Activated CD8-positive, alpha-beta T cell treated with anti-CD3 and anti-CD28 coated beads for 36 hours (primary cell): ENCODE measurements at regions of chr16 and their contacts with region 1.

Region 1: GRCh38 chr16:9008601-9009260 is 45.0 kb upstream of the USP7 start:
- DNase-seq: peak; percentile 82
- ATAC-seq: peak; percentile 97
- H3K4me3 Mint-ChIP-seq: no peak overlapping the region
- H3K27ac Mint-ChIP-seq: no peak overlapping the region
- H3K4me1 Mint-ChIP-seq: peaks cover 5% of the 10 kb centered on the region
- H3K27me3 Mint-ChIP-seq: peaks cover 20% of the 10 kb centered on the region
- CTCF ChIP-seq: peak; percentile 83

Region 2: GRCh38 chr16:8797364-8798173 is 211.2 kb before region 1 on chr16 and contains the starts of genes PMM2 and TMEM186:
- CTCF ChIA-PET with region 1: no interaction called
- POLR2A ChIA-PET with region 1: no interaction called
- intact Hi-C with region 1: no loop called
- DNase-seq: peak; percentile 98
- ATAC-seq: peak; percentile 95
- H3K4me3 Mint-ChIP-seq: peak within 1 kb of the TSS; percentile 87
- H3K27ac Mint-ChIP-seq: peak within 1 kb of the TSS; percentile 96
- H3K4me1 Mint-ChIP-seq: peaks cover 40% of the 10 kb centered on the region
- H3K27me3 Mint-ChIP-seq: no peaks in the 10 kb centered on the region
- CTCF ChIP-seq: no peak
- total RNA-seq, gene PMM2: 32.7 to 34.3 TPM
- total RNA-seq, gene TMEM186: 15.3 to 15.4 TPM

Region 3: DNA sequence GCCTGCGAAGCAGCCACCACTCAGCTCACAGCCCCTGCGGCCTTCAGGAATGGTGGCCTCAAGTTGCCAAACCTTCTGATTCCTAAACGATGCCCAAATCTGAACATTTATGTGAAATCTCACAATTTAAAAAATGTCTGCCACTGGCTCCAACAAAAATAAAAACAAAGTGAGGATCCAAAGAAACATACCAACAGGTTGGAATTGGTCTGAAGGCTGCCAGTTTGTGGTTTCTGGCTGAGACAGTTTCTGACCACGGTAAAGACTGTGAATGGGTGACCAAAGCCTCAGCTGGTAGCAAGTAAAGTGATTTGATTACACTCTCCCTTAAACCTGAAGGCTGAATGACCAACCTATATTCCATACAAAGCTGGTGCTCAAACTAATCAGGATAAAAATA is 101.6 kb before region 1 on chr16:
- CTCF ChIA-PET with region 1: interaction called, 10 read pairs
- POLR2A ChIA-PET with region 1: no interaction called
- intact Hi-C with region 1: no loop called
- DNase-seq: no peak
- ATAC-seq: no peak
- H3K4me3 Mint-ChIP-seq: no peak overlapping the region
- H3K27ac Mint-ChIP-seq: peak overlapping the region; percentile 19
- H3K4me1 Mint-ChIP-seq: peaks cover 15% of the 10 kb centered on the region
- H3K27me3 Mint-ChIP-seq: no peaks in the 10 kb centered on the region
- CTCF ChIP-seq: no peak

Region 4: GRCh38 chr16:8946544-8946943 is 62.2 kb before region 1 on chr16:
- CTCF ChIA-PET with region 1: interaction called, 11 read pairs
- POLR2A ChIA-PET with region 1: interaction called, 3 read pairs
- intact Hi-C with region 1: no loop called
- DNase-seq: no peak
- ATAC-seq: no peak
- H3K4me3 Mint-ChIP-seq: no peak overlapping the region
- H3K27ac Mint-ChIP-seq: no peak overlapping the region
- H3K4me1 Mint-ChIP-seq: peaks cover 91% of the 10 kb centered on the region
- H3K27me3 Mint-ChIP-seq: no peaks in the 10 kb centered on the region
- CTCF ChIP-seq: no peak

Region 5: DNA sequence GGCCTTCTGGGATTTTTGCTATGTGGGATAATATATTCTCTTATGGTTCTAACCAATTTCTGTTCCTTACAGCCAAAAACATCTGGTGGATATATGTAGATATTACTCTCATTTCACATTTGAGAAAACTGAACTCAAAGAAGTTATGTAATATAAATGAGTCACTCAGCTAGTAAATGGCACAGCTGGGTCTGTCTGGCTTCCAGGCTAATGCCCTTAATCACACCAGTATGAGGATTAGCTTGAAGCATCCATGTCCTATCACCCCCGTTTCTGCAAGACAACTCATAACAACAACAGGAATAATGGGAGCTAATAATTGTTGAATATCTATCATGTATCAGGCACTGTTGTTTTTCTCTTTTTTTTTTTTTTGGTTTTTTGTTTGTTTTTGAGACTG is 10.6 kb before region 1 on chr16:
- CTCF ChIA-PET with region 1: interaction called, 15 read pairs
- POLR2A ChIA-PET with region 1: no interaction called
- intact Hi-C with region 1: no loop called
- DNase-seq: no peak
- ATAC-seq: no peak
- H3K4me3 Mint-ChIP-seq: no peak overlapping the region
- H3K27ac Mint-ChIP-seq: no peak overlapping the region
- H3K4me1 Mint-ChIP-seq: no peaks in the 10 kb centered on the region
- H3K27me3 Mint-ChIP-seq: no peaks in the 10 kb centered on the region
- CTCF ChIP-seq: no peak

Region 6: DNA sequence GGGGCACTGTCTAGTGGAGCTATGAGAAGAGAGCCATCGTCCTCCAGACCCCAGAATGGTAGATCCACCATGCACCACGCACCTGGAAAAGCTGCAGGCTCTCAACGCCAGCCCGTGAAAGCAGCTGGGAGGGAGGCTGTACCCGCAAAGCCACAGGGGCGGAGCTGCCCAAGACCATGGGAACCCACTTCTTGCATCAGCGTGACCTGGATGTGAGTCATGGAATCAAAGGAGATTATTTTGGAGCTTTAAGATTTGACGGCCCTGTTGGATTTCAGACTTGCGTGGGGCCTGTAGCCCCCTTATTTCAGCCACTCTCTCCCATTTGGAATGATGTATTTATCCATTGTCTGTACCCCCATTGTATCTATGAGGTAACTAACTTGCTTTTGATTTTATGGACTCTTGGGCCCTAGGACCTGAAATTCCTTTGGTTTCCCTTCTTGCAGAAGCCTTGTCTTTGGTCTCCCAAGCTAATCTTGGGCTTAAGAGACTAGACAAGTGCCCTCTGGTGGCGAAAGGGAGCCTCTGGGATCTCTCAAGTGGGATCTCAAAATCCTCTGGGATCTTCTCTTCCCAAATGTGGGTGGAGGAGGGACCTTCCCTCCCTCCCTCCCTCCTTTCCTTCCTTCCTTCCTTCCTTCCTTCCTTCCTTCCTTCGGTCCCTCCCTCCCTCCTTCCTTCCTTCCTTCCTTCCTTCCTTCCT is 24.5 kb after region 1 on chr16:
- CTCF ChIA-PET with region 1: interaction called, 12 read pairs
- POLR2A ChIA-PET with region 1: no interaction called
- intact Hi-C with region 1: no loop called
- DNase-seq: peak; percentile 27
- ATAC-seq: no peak
- H3K4me3 Mint-ChIP-seq: no peak overlapping the region
- H3K27ac Mint-ChIP-seq: no peak overlapping the region
- H3K4me1 Mint-ChIP-seq: no peaks in the 10 kb centered on the region
- H3K27me3 Mint-ChIP-seq: peaks cover 1% of the 10 kb centered on the region
- CTCF ChIP-seq: peak; percentile 26

Region 7: DNA sequence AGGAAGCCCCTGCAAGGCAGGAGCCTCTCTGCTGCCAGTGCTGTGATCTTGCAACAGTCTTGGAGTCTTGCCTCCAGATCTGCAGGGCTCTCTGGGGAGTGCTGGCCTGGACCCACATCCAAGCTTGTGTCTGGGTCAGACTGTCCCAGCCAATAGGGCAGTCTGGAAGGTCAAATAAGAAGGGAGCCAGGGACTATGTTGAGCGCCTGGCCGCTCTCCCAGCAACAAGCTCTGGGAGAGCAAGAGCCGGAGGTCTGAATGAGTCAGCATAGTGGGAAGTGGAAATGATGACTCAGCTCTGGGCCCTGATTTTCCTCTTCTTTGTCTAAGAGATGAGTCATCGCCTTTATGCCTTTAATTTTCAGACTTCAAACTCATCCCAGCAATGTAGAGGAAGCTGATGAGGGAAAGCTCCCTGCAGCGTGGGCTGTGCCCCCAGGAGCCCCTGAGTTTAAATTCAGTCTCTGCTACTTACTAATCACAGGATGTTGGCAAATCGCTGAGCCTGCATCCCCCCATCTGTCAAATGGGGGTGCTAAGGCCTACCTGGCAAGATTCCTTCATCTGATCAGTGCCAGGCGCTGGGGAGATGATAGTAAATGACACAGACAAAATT is 39.1 kb after region 1 on chr16:
- CTCF ChIA-PET with region 1: interaction called, 12 read pairs
- POLR2A ChIA-PET with region 1: no interaction called
- intact Hi-C with region 1: no loop called
- DNase-seq: peak; percentile 76
- ATAC-seq: peak; percentile 63
- H3K4me3 Mint-ChIP-seq: no peak overlapping the region
- H3K27ac Mint-ChIP-seq: peak overlapping the region; percentile 67
- H3K4me1 Mint-ChIP-seq: peaks cover 33% of the 10 kb centered on the region
- H3K27me3 Mint-ChIP-seq: no peaks in the 10 kb centered on the region
- CTCF ChIP-seq: no peak

Region 8: GRCh38 chr16:9134739-9135138 is 126.0 kb after region 1 on chr16:
- CTCF ChIA-PET with region 1: interaction called, 15 read pairs
- POLR2A ChIA-PET with region 1: no interaction called
- intact Hi-C with region 1: no loop called
- DNase-seq: peak; percentile 83
- ATAC-seq: peak; percentile 93
- H3K4me3 Mint-ChIP-seq: no peak overlapping the region
- H3K27ac Mint-ChIP-seq: no peak overlapping the region
- H3K4me1 Mint-ChIP-seq: peaks cover 26% of the 10 kb centered on the region
- H3K27me3 Mint-ChIP-seq: no peaks in the 10 kb centered on the region
- CTCF ChIP-seq: peak; percentile 84

Region 9: DNA sequence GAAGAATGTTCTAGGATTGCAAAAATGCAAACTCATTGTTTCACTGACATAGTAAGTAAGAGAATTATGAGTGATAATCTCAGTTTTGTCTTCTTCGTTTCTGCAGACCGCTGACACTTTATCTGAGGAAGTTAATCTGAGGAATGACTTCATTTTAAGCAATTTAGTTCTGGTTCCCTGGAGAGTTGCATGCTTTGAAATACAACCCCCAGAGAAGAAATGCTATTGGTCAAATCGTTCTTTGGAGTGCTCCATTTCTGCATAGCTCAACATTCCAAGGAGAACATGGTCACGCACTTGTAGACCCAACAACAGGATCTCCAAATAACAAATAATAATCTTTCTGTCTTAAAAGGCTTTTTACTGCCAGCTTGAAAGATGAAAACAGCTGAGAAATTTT is 746.4 kb after region 1 on chr16:
- CTCF ChIA-PET with region 1: no interaction called
- POLR2A ChIA-PET with region 1: no interaction called
- intact Hi-C with region 1: no loop called
- DNase-seq: no peak
- ATAC-seq: no peak
- H3K4me3 Mint-ChIP-seq: no peak overlapping the region
- H3K27ac Mint-ChIP-seq: no peak overlapping the region
- H3K4me1 Mint-ChIP-seq: no peaks in the 10 kb centered on the region
- H3K27me3 Mint-ChIP-seq: peaks cover 4% of the 10 kb centered on the region
- CTCF ChIP-seq: no peak